Activated naive CD4-positive, alpha-beta T cell treated with anti-CD3 and anti-CD28 coated beads for 36 hours (primary cell): ENCODE measurements at regions of chr14 and their contacts with region 1.

Region 1: DNA sequence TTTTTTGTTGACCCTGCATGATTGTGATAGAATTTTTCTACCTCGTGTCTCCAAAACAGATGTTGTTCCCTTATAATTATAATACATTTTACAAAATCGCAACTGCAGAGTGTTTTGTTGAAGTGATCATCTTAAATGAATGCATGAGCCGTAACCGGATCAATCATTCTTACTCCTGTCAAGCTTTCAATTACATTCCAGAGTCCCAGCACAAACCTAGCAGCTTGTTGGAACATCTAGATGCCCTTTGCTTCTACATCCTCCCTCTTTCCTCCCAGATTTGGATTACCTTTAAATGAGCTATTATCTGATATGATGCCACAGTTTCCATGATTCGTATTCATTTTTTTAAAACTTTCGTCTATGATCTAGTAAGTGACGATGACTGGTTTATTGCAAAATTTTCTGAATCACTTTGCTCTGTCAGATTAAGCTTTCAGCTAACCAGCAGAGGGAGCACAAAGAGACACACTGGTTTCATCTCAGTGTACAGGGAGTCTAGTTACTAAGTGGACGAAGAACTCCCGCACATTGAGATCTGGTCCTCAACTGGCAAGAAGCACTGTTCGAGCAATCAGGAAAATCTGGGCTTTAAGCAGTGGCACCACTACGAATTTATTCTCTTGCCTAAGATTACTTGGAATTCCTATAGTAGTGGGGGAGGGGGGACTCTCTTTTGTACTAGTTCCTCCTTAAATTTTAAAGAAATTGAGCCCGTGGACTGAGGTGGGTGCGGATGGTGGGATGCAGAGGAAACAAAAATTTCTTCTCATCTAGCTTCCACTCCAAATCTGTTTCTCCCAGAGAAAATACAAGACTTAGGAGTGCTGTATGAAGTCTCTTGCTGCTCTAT is 40.9 kb downstream of the TSHR start:
- DNase-seq: peak; percentile 38
- H3K4me3 Mint-ChIP-seq: no peak overlapping the region
- H3K27ac Mint-ChIP-seq: no peak overlapping the region
- H3K4me1 Mint-ChIP-seq: peaks cover 7% of the 10 kb centered on the region
- H3K27me3 Mint-ChIP-seq: peaks cover 14% of the 10 kb centered on the region

Region 2: DNA sequence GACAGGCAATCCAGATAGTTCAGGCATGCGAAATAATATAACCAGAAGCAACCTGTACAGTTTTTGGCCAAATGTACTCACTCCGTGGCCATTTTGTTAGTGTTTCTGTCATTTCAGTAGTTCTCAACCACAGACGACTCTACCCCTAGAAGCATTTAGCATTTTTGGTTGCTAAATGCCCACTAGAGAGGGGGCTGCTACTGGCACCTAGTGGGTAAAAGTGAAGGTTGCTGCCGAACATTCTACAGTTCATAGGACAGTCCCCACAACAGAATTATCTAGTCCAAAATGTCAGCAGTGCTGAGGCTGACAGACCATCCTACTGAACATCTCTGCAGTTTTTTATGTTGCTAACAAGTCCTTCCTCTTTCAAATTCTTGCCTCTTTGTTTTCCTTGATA is 66.5 kb after region 1 on chr14:
- CTCF ChIA-PET with region 1: no interaction called
- intact Hi-C with region 1: loop called (anchors 2 kb)
- DNase-seq: peak; percentile 43
- H3K4me3 Mint-ChIP-seq: no peak overlapping the region
- H3K27ac Mint-ChIP-seq: no peak overlapping the region
- H3K4me1 Mint-ChIP-seq: no peaks in the 10 kb centered on the region
- H3K27me3 Mint-ChIP-seq: peaks cover 6% of the 10 kb centered on the region

Region 3: DNA sequence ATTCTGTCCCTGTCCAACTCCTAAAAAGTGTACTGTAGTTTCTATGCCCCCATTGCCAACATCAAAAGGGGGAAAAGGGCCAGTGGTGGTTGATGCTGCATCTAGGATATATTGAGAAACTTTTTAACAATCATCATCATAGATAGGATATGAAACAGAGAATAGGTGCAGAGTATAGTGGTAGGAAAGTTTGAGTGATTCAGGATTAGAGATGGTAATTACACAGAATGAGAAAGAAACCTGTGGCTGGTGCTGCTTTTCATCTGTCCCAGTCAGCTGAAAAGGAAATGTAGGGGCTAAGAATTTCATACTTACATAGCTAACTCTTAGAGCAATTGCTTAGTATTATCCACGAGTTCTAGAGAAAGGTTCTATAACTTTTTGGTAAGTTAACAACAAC is 156.9 kb after region 1 on chr14:
- CTCF ChIA-PET with region 1: interaction called, 6 read pairs
- intact Hi-C with region 1: loop called (anchors 1 kb)
- DNase-seq: peak; percentile 31
- H3K4me3 Mint-ChIP-seq: no peak overlapping the region
- H3K27ac Mint-ChIP-seq: no peak overlapping the region
- H3K4me1 Mint-ChIP-seq: peaks cover 18% of the 10 kb centered on the region
- H3K27me3 Mint-ChIP-seq: peaks cover 10% of the 10 kb centered on the region

Region 4: GRCh38 chr14:81164167-81164774 is 168.0 kb after region 1 on chr14:
- CTCF ChIA-PET with region 1: interaction called, 39 read pairs
- intact Hi-C with region 1: loop called (anchors 1 kb)
- DNase-seq: peak; percentile 87
- H3K4me3 Mint-ChIP-seq: no peak overlapping the region
- H3K27ac Mint-ChIP-seq: no peak overlapping the region
- H3K4me1 Mint-ChIP-seq: peaks cover 10% of the 10 kb centered on the region
- H3K27me3 Mint-ChIP-seq: no peaks in the 10 kb centered on the region

Region 5: GRCh38 chr14:81211844-81212243 is 215.6 kb after region 1 on chr14:
- CTCF ChIA-PET with region 1: no interaction called
- intact Hi-C with region 1: no loop called
- DNase-seq: peak; percentile 26
- H3K4me3 Mint-ChIP-seq: no peak overlapping the region
- H3K27ac Mint-ChIP-seq: no peak overlapping the region
- H3K4me1 Mint-ChIP-seq: peaks cover 38% of the 10 kb centered on the region
- H3K27me3 Mint-ChIP-seq: no peaks in the 10 kb centered on the region

Region 6: GRCh38 chr14:81453166-81453766 is 457.0 kb after region 1 on chr14:
- CTCF ChIA-PET with region 1: interaction called, 7 read pairs
- intact Hi-C with region 1: loop called (anchors 1 kb)
- DNase-seq: peak; percentile 69
- H3K4me3 Mint-ChIP-seq: no peak overlapping the region
- H3K27ac Mint-ChIP-seq: no peak overlapping the region
- H3K4me1 Mint-ChIP-seq: peaks cover 13% of the 10 kb centered on the region
- H3K27me3 Mint-ChIP-seq: peaks cover 11% of the 10 kb centered on the region

Region 7: GRCh38 chr14:81464247-81465002 is 468.1 kb after region 1 on chr14:
- CTCF ChIA-PET with region 1: interaction called, 8 read pairs
- intact Hi-C with region 1: loop called (anchors 2 kb)
- DNase-seq: peak; percentile 75
- H3K4me3 Mint-ChIP-seq: peak overlapping the region; percentile 73
- H3K27ac Mint-ChIP-seq: peak overlapping the region; percentile 78
- H3K4me1 Mint-ChIP-seq: peaks cover 9% of the 10 kb centered on the region
- H3K27me3 Mint-ChIP-seq: no peaks in the 10 kb centered on the region